PC-9 (cell line): ENCODE measurements at regions of chr19 and their contacts with region 1.

Region 1: DNA sequence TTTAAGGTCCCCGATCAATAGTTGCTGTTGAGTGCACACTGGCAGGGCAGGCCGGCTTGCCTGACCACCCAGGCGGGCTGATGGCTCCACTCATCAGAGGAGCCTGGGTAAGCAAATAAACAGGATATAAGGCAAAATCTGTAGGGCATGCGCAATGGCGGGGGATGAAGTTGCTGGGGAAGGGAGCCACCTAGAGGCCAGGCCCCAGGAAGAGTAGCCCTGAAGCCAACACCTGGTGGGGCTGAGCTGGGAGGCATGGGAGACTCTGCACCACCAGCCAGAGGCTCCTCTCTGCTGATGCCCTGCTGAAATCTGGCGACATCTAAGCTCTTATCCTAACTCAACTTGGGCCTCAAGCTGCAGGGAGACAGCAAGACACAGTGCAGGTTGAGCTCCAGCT is 324.3 kb downstream of the ZNF536 start:
- DNase-seq: no peak
- H3K4me3 ChIP-seq: no peak overlapping the region
- H3K27ac ChIP-seq: no peak overlapping the region
- H3K4me1 ChIP-seq: no peaks in the 10 kb centered on the region
- H3K27me3 ChIP-seq: peaks cover 34% of the 10 kb centered on the region
- CTCF ChIP-seq: no peak

Region 2: GRCh38 chr19:31204115-31204514 is 507.6 kb after region 1 on chr19:
- CTCF ChIA-PET with region 1: interaction called, 13 read pairs
- POLR2A ChIA-PET with region 1: no interaction called
- intact Hi-C with region 1: no loop called
- DNase-seq: no peak
- H3K4me3 ChIP-seq: no peak overlapping the region
- H3K27ac ChIP-seq: no peak overlapping the region
- H3K4me1 ChIP-seq: no peaks in the 10 kb centered on the region
- H3K27me3 ChIP-seq: no peaks in the 10 kb centered on the region
- CTCF ChIP-seq: no peak

Region 3: GRCh38 chr19:31548941-31549340 is 852.4 kb after region 1 on chr19:
- CTCF ChIA-PET with region 1: no interaction called
- POLR2A ChIA-PET with region 1: no interaction called
- intact Hi-C with region 1: no loop called
- DNase-seq: no peak
- H3K4me3 ChIP-seq: no peak overlapping the region
- H3K27ac ChIP-seq: no peak overlapping the region
- H3K4me1 ChIP-seq: no peaks in the 10 kb centered on the region
- H3K27me3 ChIP-seq: no peaks in the 10 kb centered on the region
- CTCF ChIP-seq: peak; percentile 33; the same call in 1 of the 2 replicates